Endothelial cell of umbilical vein (primary cell): ENCODE measurements at regions of chr6 and their contacts with region 1.

Region 1: DNA sequence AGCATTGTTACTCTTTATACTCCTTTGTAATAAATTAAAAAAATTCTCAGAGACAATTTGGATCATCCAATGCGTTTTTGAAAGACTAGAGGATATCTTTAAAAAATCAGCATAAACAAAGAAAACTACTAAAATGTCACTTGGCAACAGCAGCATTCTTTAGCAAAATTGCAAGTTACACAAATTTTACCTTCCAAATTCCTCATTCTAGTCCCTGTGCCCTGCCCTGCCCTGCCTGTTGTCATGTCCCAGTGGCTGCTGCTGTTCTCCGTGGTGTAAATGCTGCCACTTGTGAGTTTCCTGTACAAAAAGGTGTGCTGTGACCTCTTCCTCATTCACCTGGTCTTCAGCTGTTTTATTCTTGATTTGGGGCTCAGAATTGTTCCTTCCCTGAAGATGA is 83.2 kb downstream of the CDC5L start:
- DNase-seq: no peak
- H3K4me3 ChIP-seq: no peak overlapping the region
- H3K27ac ChIP-seq: no peak overlapping the region
- H3K4me1 ChIP-seq: no peaks in the 10 kb centered on the region
- H3K27me3 ChIP-seq: peaks cover 0 to 6% of the 10 kb centered on the region in 2 experiments
- CTCF ChIP-seq: no peak
- POLR2A ChIP-seq: no peak

Region 2: DNA sequence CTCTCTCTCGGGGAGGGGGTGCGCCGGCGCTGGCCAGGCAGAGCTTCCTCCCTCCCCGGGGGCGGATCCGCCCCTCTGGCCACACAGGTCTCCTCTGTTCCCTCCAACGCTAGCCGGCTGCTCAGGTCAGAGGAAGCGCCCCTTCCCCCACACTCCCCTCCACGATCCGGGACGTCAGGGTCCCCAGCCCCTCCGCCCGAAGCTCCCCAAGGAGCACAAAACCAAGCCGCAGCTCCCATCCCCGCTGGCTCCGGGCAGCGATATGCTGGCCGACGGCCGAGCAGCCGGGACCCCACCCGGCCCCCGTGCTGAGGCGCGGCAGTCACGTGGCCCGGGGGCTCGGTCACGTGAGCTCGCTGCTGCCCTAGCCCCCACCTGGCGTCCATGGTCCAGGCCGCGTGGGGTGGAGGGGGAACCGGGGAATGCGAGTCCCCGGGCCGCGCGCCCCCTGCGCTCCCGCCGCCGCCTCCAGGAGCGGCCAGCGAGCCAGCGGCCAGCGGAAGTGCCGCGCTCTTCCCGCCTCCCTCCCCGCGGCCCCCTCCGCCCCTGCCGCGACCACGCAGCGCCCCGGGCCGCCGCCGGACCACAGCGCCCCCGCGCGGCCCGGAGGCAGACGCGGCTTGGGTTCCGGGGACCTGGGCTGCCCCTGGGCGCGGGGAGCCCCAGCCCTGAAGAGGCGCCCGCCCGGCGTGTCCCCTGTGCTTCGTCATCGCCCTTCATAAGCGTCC is 213.6 kb before region 1 on chr6 and contains the start of gene SLC35B2:
- CTCF ChIA-PET with region 1: no interaction called
- POLR2A ChIA-PET with region 1: no interaction called
- dilution Hi-C with region 1: no loop called
- intact Hi-C with region 1: no loop called
- DNase-seq: peak; percentile 76
- H3K4me3 ChIP-seq: peak within 1 kb of the TSS; percentile 67 to 89 (median 74)
- H3K27ac ChIP-seq: peak within 1 kb of the TSS; percentile 49
- H3K4me1 ChIP-seq: peaks cover 14% of the 10 kb centered on the region
- H3K27me3 ChIP-seq: no peaks in the 10 kb centered on the region
- CTCF ChIP-seq: peak; percentile 65 to 66
- POLR2A ChIP-seq: peak; percentile 79
- total RNA-seq, gene SLC35B2: 53.4 and 53.9 TPM in 2 replicates

Region 3: GRCh38 chr6:44431118-44431725 is 39.5 kb before region 1 on chr6:
- CTCF ChIA-PET with region 1: interaction called, 15 read pairs
- POLR2A ChIA-PET with region 1: no interaction called
- dilution Hi-C with region 1: no loop called
- intact Hi-C with region 1: no loop called
- DNase-seq: peak; percentile 73
- H3K4me3 ChIP-seq: no peak overlapping the region
- H3K27ac ChIP-seq: no peak overlapping the region
- H3K4me1 ChIP-seq: no peaks in the 10 kb centered on the region
- H3K27me3 ChIP-seq: no peaks in the 10 kb centered on the region
- CTCF ChIP-seq: peak; percentile 41 to 50
- POLR2A ChIP-seq: no peak

Region 4: DNA sequence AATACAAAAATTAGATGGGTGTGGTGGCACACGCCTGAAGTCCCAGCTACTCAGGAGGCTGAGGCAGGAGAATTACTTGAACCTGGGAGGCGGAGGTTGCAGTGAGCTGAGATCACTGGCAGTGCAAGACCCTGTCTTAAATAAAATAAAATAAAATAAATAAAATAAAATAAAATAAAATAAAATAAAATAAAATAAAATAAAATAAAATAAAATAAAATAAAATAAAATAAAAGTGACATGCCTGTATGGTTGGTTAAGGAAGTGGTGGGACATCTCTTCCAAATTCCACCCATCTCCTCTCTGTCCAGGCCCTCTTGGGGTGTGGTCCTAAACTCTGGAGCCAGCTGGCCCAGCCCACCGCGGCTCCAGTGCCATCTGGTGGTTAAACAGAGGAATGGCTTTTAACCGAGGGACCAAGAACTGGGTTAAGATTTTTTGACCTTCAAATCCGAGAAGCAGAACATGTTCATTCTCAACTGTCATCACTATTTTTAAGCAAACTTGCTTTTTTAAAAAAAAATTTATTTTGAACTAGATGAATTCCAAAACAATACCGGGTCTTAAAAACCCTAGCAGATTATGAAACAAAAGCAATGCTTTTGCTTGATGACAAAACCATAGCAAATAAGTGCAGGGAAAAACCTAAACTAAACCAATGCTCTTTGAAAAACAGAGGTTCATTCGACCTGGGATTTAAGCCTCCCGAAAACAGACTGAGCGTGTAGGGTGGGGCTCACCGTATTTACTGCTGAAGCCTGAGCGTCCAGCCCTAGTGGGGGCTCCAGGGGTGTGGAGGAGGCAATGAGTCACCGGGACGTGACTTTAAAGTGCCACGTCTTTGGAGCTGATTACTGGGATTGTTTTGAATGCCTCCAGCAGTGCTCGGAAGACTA is 14.4 kb before region 1 on chr6:
- CTCF ChIA-PET with region 1: interaction called, 15 read pairs
- POLR2A ChIA-PET with region 1: no interaction called
- dilution Hi-C with region 1: no loop called
- intact Hi-C with region 1: no loop called
- DNase-seq: peak; percentile 63
- H3K4me3 ChIP-seq: peak overlapping the region in 2 of 3 experiments; percentile 19 to 50
- H3K27ac ChIP-seq: peak overlapping the region; percentile 8
- H3K4me1 ChIP-seq: peaks cover 23% of the 10 kb centered on the region
- H3K27me3 ChIP-seq: peaks cover 0 to 3% of the 10 kb centered on the region in 2 experiments
- CTCF ChIP-seq: peak; percentile 74 to 81
- POLR2A ChIP-seq: no peak

Region 5: DNA sequence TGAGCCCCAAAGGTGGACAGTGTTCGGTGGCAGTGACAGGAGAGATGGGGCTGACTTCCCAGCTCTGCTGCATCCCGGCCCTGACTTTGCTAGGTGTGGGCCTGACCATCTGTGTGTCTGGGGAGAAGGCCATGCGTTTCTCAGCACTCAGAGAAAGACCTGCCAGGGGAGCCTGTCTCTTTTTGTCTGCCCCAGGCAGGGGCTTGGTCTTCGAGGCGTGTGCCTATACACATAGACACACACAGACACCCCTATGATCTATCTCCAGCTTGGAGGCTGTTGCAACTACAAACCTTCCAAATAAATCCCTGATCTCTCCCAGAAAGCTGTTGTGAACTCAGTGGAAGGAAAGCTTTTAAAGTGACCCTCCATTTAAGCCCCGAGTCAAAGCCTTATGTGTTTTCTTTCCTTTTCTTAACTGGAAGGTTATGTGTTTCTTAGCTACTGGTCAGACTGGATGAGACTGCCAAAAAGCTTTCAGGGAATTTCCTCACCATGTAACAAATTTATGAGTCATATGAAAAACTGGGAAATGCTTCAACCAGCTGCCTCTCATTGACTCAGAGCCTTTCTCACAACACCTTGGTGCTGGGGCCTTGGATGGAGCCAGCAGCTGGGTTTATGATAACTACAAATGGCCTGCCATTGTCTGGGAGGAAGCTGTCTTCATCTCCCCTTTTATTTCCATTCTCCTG is 19.3 kb after region 1 on chr6:
- CTCF ChIA-PET with region 1: interaction called, 110 read pairs
- POLR2A ChIA-PET with region 1: no interaction called
- dilution Hi-C with region 1: no loop called
- intact Hi-C with region 1: loop called (anchors 1 kb)
- DNase-seq: peak; percentile 97
- H3K4me3 ChIP-seq: peak overlapping the region in 1 of 3 experiments; percentile 39
- H3K27ac ChIP-seq: peak overlapping the region; percentile 94
- H3K4me1 ChIP-seq: peaks cover 22% of the 10 kb centered on the region
- H3K27me3 ChIP-seq: no peaks in the 10 kb centered on the region
- CTCF ChIP-seq: no peak
- POLR2A ChIP-seq: no peak

Region 6: DNA sequence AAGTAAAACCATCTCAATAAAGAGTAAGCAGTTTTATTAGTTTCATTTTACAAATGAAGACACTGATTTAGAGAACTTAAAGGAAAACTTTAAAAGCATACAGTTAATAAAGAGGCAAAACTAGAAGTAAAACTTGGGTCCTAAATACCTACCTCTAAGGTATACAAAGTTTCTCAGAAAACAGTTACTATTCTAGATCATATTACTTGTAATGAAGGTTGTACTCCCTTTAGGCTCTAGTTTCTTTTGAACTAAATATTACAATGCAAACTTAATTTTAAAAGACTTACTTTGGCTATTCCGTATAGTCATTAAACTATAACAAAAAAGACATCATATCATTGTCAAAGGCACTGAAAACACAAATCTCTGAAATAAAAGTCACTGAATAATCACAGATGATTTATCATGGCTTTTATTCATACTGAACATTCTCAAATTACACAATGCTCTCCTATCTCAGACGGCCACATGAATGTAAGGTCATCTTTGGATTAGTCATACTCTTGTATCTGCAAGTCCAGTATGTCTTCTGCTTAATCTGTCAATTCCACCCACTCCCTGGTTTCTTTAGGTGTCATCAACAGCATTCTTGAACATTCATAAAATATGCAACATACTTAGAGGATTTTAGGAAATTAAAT is 495.8 kb after region 1 on chr6:
- CTCF ChIA-PET with region 1: no interaction called
- POLR2A ChIA-PET with region 1: no interaction called
- dilution Hi-C with region 1: no loop called
- intact Hi-C with region 1: no loop called
- DNase-seq: peak; percentile 91
- H3K4me3 ChIP-seq: no peak overlapping the region
- H3K27ac ChIP-seq: no peak overlapping the region
- H3K4me1 ChIP-seq: peaks cover 7% of the 10 kb centered on the region
- H3K27me3 ChIP-seq: no peaks in the 10 kb centered on the region
- CTCF ChIP-seq: no peak
- POLR2A ChIP-seq: no peak